GM18951 (cell line): ENCODE measurements at regions of chr7 and their contacts with region 1.

Region 1: GRCh38 chr7:123865517-123866117 is 20.6 kb downstream of the HYAL4 start:
- POLR2A ChIP-seq: no peak

Region 2: GRCh38 chr7:123805287-123805686 is 60.3 kb before region 1 on chr7:
- in situ Hi-C with region 1: loop called (anchors 10 kb)
- POLR2A ChIP-seq: no peak